Dorsolateral prefrontal cortex (tissue), 120 donors: ENCODE measurements at regions of chr2 and their contacts with region 1.

Region 1: GRCh38 chr2:165573534-165574461 is 104.3 kb downstream of the CSRNP3 start:
- DNase-seq: peak; percentile 32 to 80 (median 76)
- H3K4me3 ChIP-seq: peak overlapping the region; percentile 37 to 76 (median 63)
- H3K27ac ChIP-seq: peak overlapping the region in 58 of 59 donors; percentile 5 to 88 (median 74)
- H3K27me3 ChIP-seq: no peaks in the 10 kb centered on the region
- CTCF ChIP-seq: peak in 1 of 56 donors; percentile 7

Region 2: GRCh38 chr2:165469417-165469816 is 104.4 kb before region 1 on chr2 and contains the start of gene CSRNP3:
- intact Hi-C with region 1: loop called in 1 of 2 experiments (anchors 10 kb)
- DNase-seq: peak; percentile 21 to 86 (median 77)
- H3K4me3 ChIP-seq: peak within 1 kb of the TSS; percentile 35 to 77 (median 62)
- H3K27ac ChIP-seq: peak within 1 kb of the TSS in 49 of 59 donors; percentile 8 to 81 (median 57)
- H3K27me3 ChIP-seq: no peaks in the 10 kb centered on the region
- CTCF ChIP-seq: peak in 20 of 56 donors; percentile 7 to 49 (median 30)
- total RNA-seq, gene CSRNP3: 36.6 to 164 (median 108) TPM

Region 3: GRCh38 chr2:165634855-165635254 is 61.1 kb after region 1 on chr2:
- intact Hi-C with region 1: loop called in 1 of 2 experiments (anchors 2 kb)
- DNase-seq: peak; percentile 45 to 91 (median 85)
- H3K4me3 ChIP-seq: peak overlapping the region in 26 of 59 donors; percentile 0 to 44 (median 16)
- H3K27ac ChIP-seq: peak overlapping the region in 57 of 59 donors; percentile 5 to 85 (median 65)
- H3K27me3 ChIP-seq: no peaks in the 10 kb centered on the region
- CTCF ChIP-seq: peak in 6 of 56 donors; percentile 8 to 30 (median 18)